AG04449 (cell line): ENCODE measurements at regions of chrX and their contacts with region 1.

Region 1: GRCh38 chrX:51461053-51462044 is 35.0 kb downstream of the NUDT11 start:
- DNase-seq: no peak
- H3K4me3 ChIP-seq: no peak overlapping the region
- CTCF ChIP-seq: peak; percentile 42

Region 2: GRCh38 chrX:51476930-51477329 is 15.6 kb after region 1 on chrX:
- CTCF ChIA-PET with region 1: interaction called, 10 read pairs
- POLR2A ChIA-PET with region 1: no interaction called
- DNase-seq: no peak
- H3K4me3 ChIP-seq: no peak overlapping the region
- CTCF ChIP-seq: no peak

Region 3: GRCh38 chrX:51487960-51488267 is 26.6 kb after region 1 on chrX:
- CTCF ChIA-PET with region 1: interaction called, 10 read pairs
- POLR2A ChIA-PET with region 1: no interaction called
- DNase-seq: no peak
- H3K4me3 ChIP-seq: no peak overlapping the region
- CTCF ChIP-seq: no peak